CD4-positive, alpha-beta memory T cell (primary cell): ENCODE measurements at regions of chr1 and their contacts with region 1.

Region 1: GRCh38 chr1:19582302-19582701 is 61.8 kb upstream of the NBL1 start:
- DNase-seq: peak; percentile 56 to 74 (median 64)
- H3K4me3 ChIP-seq: no peak overlapping the region
- H3K4me3 Mint-ChIP-seq: no peak overlapping the region
- H3K27ac ChIP-seq: no peak overlapping the region
- H3K27ac Mint-ChIP-seq: peak overlapping the region in 2 of 7 donors; percentile 46 to 71
- H3K4me1 ChIP-seq: peaks cover 10% of the 10 kb centered on the region
- H3K4me1 Mint-ChIP-seq: peaks cover 7 to 15% (median 12%) of the 10 kb centered on the region in 4 donors
- H3K27me3 ChIP-seq: no peaks in the 10 kb centered on the region
- H3K27me3 Mint-ChIP-seq: no peaks in the 10 kb centered on the region

Region 2: GRCh38 chr1:19374083-19374801 is 208.1 kb before region 1 on chr1:
- CTCF ChIA-PET with region 1: interaction called, 14 read pairs
- POLR2A ChIA-PET with region 1: no interaction called
- intact Hi-C with region 1: no loop called
- DNase-seq: no peak
- H3K4me3 ChIP-seq: no peak overlapping the region
- H3K4me3 Mint-ChIP-seq: no peak overlapping the region
- H3K27ac ChIP-seq: no peak overlapping the region
- H3K27ac Mint-ChIP-seq: peak overlapping the region in 2 of 7 donors; percentile 55 to 74
- H3K4me1 ChIP-seq: no peaks in the 10 kb centered on the region
- H3K4me1 Mint-ChIP-seq: peaks cover 14 to 48% (median 23%) of the 10 kb centered on the region in 4 donors
- H3K27me3 ChIP-seq: no peaks in the 10 kb centered on the region
- H3K27me3 Mint-ChIP-seq: no peaks in the 10 kb centered on the region

Region 3: GRCh38 chr1:19439464-19440171 is 142.7 kb before region 1 on chr1:
- CTCF ChIA-PET with region 1: interaction called, 99 read pairs
- POLR2A ChIA-PET with region 1: interaction called, 5 read pairs
- intact Hi-C with region 1: loop called (anchors 1 kb)
- DNase-seq: peak; percentile 38 to 50 (median 42)
- H3K4me3 ChIP-seq: no peak overlapping the region
- H3K4me3 Mint-ChIP-seq: peak overlapping the region in 6 of 8 donors; percentile 22 to 67 (median 36)
- H3K27ac ChIP-seq: peak overlapping the region; percentile 22
- H3K27ac Mint-ChIP-seq: peak overlapping the region; percentile 45 to 88 (median 81)
- H3K4me1 ChIP-seq: peaks cover 91% of the 10 kb centered on the region
- H3K4me1 Mint-ChIP-seq: peaks cover 71 to 98% (median 83%) of the 10 kb centered on the region in 4 donors
- H3K27me3 ChIP-seq: no peaks in the 10 kb centered on the region
- H3K27me3 Mint-ChIP-seq: no peaks in the 10 kb centered on the region

Region 4: DNA sequence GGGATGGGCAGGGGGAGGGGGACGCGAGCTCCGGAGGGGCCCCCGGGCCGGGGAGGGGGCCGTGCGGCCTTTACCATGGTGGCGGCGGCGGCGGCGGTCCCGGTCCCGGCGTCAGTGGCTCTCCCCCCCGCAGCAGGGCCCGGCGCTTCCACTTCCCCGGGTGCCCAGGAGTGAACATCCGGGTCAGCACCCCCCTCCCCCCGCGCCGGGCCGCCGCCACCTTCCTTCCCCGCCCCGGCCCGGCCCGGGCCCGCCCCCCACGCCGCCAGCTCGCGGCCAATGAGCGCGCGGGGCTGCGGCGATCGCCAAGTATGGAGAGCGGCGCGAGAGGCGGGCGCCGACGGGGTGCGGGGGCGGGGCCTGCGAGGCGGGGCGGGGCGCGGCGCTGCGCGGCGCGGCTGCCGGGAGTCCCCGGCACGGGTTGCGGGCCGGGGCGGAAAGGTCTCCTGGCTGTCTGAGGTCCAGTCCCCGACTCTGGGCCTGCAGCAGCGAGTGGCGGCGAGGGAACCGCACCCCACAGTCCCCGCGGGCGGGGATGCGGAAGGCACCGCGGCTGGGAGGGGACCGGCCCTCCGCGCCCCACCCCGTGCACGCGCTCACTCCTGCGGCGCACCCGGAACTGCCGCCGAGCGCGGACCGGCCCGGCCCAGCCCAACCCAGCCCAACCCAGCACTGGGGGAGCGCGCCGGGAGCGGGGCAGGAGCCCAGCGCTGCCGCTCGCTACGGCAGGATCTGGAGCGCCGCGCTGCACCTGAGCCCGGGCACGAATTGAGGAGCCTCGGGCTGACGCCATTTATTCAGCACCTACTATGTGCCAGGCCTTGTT is 96.7 kb before region 1 on chr1 and contains the start of gene CAPZB:
- CTCF ChIA-PET with region 1: interaction called, 55 read pairs
- POLR2A ChIA-PET with region 1: interaction called, 13 read pairs
- intact Hi-C with region 1: loop called (anchors 5 kb)
- DNase-seq: peak; percentile 90 to 92 (median 92)
- H3K4me3 ChIP-seq: peak within 1 kb of the TSS; percentile 87 to 88
- H3K4me3 Mint-ChIP-seq: peak within 1 kb of the TSS; percentile 91 to 98 (median 94)
- H3K27ac ChIP-seq: peak within 1 kb of the TSS; percentile 89
- H3K27ac Mint-ChIP-seq: peak within 1 kb of the TSS; percentile 94 to 99 (median 97)
- H3K4me1 ChIP-seq: peaks cover 63% of the 10 kb centered on the region
- H3K4me1 Mint-ChIP-seq: peaks cover 46 to 69% (median 55%) of the 10 kb centered on the region in 4 donors
- H3K27me3 ChIP-seq: no peaks in the 10 kb centered on the region
- H3K27me3 Mint-ChIP-seq: no peaks in the 10 kb centered on the region
- total RNA-seq, gene CAPZB: 244 to 255 TPM

Region 5: DNA sequence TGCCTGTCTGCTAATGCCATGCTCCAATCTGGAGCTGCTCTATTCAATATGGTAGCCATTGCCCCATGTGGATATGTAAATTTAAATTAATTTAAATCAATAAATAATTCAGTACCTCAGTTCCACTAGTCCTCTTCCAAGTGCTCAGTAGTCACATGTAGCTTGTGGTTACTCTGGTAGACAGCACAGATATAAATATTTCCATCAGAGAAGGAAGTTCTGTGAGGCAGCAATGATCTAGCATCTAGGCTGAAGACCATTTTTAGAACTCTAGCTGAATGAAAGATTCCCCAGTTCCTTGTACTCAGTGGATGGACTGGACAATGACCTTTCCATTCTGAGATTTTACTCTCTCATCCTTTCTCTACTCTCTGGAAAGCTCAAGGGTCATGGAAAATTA is 71.2 kb before region 1 on chr1:
- CTCF ChIA-PET with region 1: no interaction called
- POLR2A ChIA-PET with region 1: no interaction called
- intact Hi-C with region 1: no loop called
- DNase-seq: no peak
- H3K4me3 ChIP-seq: no peak overlapping the region
- H3K4me3 Mint-ChIP-seq: no peak overlapping the region
- H3K27ac ChIP-seq: no peak overlapping the region
- H3K27ac Mint-ChIP-seq: no peak overlapping the region
- H3K4me1 ChIP-seq: peaks cover 9% of the 10 kb centered on the region
- H3K4me1 Mint-ChIP-seq: peaks cover 5 to 15% (median 6%) of the 10 kb centered on the region in 4 donors
- H3K27me3 ChIP-seq: no peaks in the 10 kb centered on the region
- H3K27me3 Mint-ChIP-seq: peaks cover 0 to 2% of the 10 kb centered on the region in 2 donors

Region 6: DNA sequence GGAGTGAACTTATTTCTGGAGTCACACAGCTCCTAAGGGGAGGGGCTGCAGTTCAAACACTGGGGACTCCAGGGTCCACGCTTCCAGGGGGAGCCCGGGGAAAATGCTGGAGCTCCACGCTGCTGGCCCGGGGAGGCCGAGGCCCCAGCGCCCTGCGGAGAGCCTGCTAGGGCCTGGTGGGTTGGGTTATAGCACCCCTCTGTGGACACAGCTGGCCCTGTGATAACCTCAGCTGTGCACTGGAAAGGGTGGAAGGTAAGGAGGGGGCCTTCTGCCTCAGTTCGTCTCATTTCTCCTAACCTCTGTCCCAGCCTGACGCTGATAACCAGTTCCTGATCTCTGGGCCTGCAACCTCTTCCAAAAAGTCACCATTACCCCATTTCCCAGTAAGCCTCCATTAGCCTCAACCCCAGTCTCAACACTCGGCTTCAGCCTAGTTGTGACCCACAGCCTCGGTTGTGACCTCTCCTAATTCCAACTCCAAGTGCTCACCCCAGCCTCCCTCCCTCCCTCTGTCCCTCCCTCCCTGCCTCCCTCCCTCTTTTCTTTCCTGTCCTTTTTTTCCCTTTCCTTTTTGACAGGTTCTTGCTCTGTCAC is 68.9 kb after region 1 on chr1:
- CTCF ChIA-PET with region 1: interaction called, 53 read pairs
- POLR2A ChIA-PET with region 1: interaction called, 3 read pairs
- intact Hi-C with region 1: loop called (anchors 1 kb)
- DNase-seq: peak; percentile 35 to 48 (median 47)
- H3K4me3 ChIP-seq: no peak overlapping the region
- H3K4me3 Mint-ChIP-seq: no peak overlapping the region
- H3K27ac ChIP-seq: no peak overlapping the region
- H3K27ac Mint-ChIP-seq: peak overlapping the region in 3 of 7 donors; percentile 23 to 78 (median 57)
- H3K4me1 ChIP-seq: peaks cover 18% of the 10 kb centered on the region
- H3K4me1 Mint-ChIP-seq: peaks cover 15 to 45% (median 24%) of the 10 kb centered on the region in 4 donors
- H3K27me3 ChIP-seq: no peaks in the 10 kb centered on the region
- H3K27me3 Mint-ChIP-seq: no peaks in the 10 kb centered on the region

Region 7: GRCh38 chr1:20355831-20356735 is 773.8 kb after region 1 on chr1:
- CTCF ChIA-PET with region 1: no interaction called
- POLR2A ChIA-PET with region 1: no interaction called
- intact Hi-C with region 1: no loop called
- DNase-seq: no peak
- H3K4me3 ChIP-seq: no peak overlapping the region
- H3K4me3 Mint-ChIP-seq: no peak overlapping the region
- H3K27ac ChIP-seq: no peak overlapping the region
- H3K27ac Mint-ChIP-seq: no peak overlapping the region
- H3K4me1 ChIP-seq: no peaks in the 10 kb centered on the region
- H3K4me1 Mint-ChIP-seq: peaks cover 3 to 10% (median 9%) of the 10 kb centered on the region in 4 donors
- H3K27me3 ChIP-seq: no peaks in the 10 kb centered on the region
- H3K27me3 Mint-ChIP-seq: peaks cover 15 to 26% of the 10 kb centered on the region in 2 donors